ENCODE measurements at regions of chr3 and their contacts with region 1.

Region 1: GRCh38 chr3:155585384-155585783 is 159.5 kb downstream of the PLCH1 start:
- DNase-seq: no peak
- H3K4me3 ChIP-seq: no peak overlapping the region
- H3K27ac ChIP-seq: no peak overlapping the region
- H3K4me1 ChIP-seq: no peaks in the 10 kb centered on the region
- H3K27me3 ChIP-seq: no peaks in the 10 kb centered on the region
- CTCF ChIP-seq: no peak
- POLR2A ChIP-seq: no peak

Region 2: DNA sequence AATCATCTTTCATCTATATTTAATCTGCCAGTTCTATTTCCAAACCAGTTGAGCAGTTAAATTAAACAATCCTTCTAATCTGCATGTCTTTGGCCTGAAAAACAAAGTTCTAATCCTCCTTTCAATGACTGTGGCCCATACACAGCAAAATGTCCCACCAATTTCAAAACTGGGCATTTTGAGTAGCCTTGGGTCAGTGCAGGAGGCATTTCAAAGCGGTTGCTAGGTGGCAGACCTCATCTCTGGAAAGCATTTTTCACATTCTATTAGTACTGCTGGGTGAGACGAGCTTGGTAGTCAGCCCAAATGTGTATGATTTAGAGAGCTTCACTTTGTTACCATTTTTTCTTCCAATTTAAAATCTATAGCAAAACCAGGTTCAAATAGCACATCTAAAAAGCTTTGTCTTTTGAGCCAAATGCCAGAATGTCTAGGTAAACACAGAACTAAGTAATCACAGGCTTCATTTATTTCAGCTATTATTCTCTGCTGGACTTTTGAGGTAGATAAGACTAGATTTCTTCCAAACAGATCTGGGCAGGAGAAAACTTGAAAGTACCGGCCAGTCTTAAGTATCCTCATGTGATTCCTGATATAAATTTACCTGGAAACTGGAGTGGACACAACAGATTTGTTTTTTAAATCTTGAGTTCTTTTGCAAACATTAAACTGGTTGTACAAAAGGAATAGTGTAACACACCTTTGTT is 1473.1 kb before region 1 on chr3:
- intact Hi-C with region 1: no loop called
- DNase-seq: no peak
- H3K4me3 ChIP-seq: no peak overlapping the region
- H3K27ac ChIP-seq: no peak overlapping the region
- H3K4me1 ChIP-seq: no peaks in the 10 kb centered on the region
- H3K27me3 ChIP-seq: no peaks in the 10 kb centered on the region
- CTCF ChIP-seq: no peak
- POLR2A ChIP-seq: no peak

Region 3: GRCh38 chr3:155391551-155391958 is 193.8 kb before region 1 on chr3:
- intact Hi-C with region 1: no loop called
- DNase-seq: peak in 1 of 2 donors; percentile 62
- H3K4me3 ChIP-seq: no peak overlapping the region
- H3K27ac ChIP-seq: peak overlapping the region; percentile 62 to 70
- H3K4me1 ChIP-seq: peaks cover 0 to 5% of the 10 kb centered on the region in 2 donors
- H3K27me3 ChIP-seq: no peaks in the 10 kb centered on the region
- CTCF ChIP-seq: no peak
- POLR2A ChIP-seq: no peak

Region 4: GRCh38 chr3:155608228-155608920 is 23.0 kb after region 1 on chr3:
- intact Hi-C with region 1: loop called (anchors 2 kb)
- DNase-seq: no peak
- H3K4me3 ChIP-seq: no peak overlapping the region
- H3K27ac ChIP-seq: no peak overlapping the region
- H3K4me1 ChIP-seq: no peaks in the 10 kb centered on the region
- H3K27me3 ChIP-seq: no peaks in the 10 kb centered on the region
- CTCF ChIP-seq: no peak
- POLR2A ChIP-seq: no peak

Measured in breast epithelium (tissue), 4 donors.